Breast epithelium (tissue), 4 donors: ENCODE measurements at regions of chr10 and their contacts with region 1.

Region 1: GRCh38 chr10:96529634-96530279 is 16.0 kb upstream of the TLL2 start:
- DNase-seq: no peak
- H3K4me3 ChIP-seq: no peak overlapping the region
- H3K27ac ChIP-seq: no peak overlapping the region
- H3K4me1 ChIP-seq: no peaks in the 10 kb centered on the region
- H3K27me3 ChIP-seq: no peaks in the 10 kb centered on the region
- CTCF ChIP-seq: no peak
- POLR2A ChIP-seq: no peak

Region 2: GRCh38 chr10:96491299-96491698 is 38.5 kb before region 1 on chr10:
- intact Hi-C with region 1: loop called (anchors 2 kb)
- DNase-seq: no peak
- H3K4me3 ChIP-seq: no peak overlapping the region
- H3K27ac ChIP-seq: no peak overlapping the region
- H3K4me1 ChIP-seq: no peaks in the 10 kb centered on the region
- H3K27me3 ChIP-seq: no peaks in the 10 kb centered on the region
- CTCF ChIP-seq: no peak
- POLR2A ChIP-seq: no peak

Region 3: GRCh38 chr10:96556003-96556402 is 26.2 kb after region 1 on chr10:
- intact Hi-C with region 1: no loop called
- DNase-seq: no peak
- H3K4me3 ChIP-seq: no peak overlapping the region
- H3K27ac ChIP-seq: no peak overlapping the region
- H3K4me1 ChIP-seq: no peaks in the 10 kb centered on the region
- H3K27me3 ChIP-seq: no peaks in the 10 kb centered on the region
- CTCF ChIP-seq: peak in 1 of 3 donors; percentile 13
- POLR2A ChIP-seq: no peak